ENCODE measurements at regions of chr3 and their contacts with region 1.

Region 1: GRCh38 chr3:71444028-71444860 is 139.3 kb downstream of the FOXP1 start:
- DNase-seq: peak; percentile 79
- H3K4me3 Mint-ChIP-seq: peak overlapping the region; percentile 65
- H3K27ac Mint-ChIP-seq: peak overlapping the region; percentile 95
- H3K4me1 Mint-ChIP-seq: peaks cover 87% of the 10 kb centered on the region
- H3K27me3 Mint-ChIP-seq: no peaks in the 10 kb centered on the region

Region 2: GRCh38 chr3:71369701-71370391 is 74.4 kb before region 1 on chr3:
- CTCF ChIA-PET with region 1: no interaction called
- POLR2A ChIA-PET with region 1: no interaction called
- intact Hi-C with region 1: no loop called
- DNase-seq: no peak
- H3K4me3 Mint-ChIP-seq: no peak overlapping the region
- H3K27ac Mint-ChIP-seq: no peak overlapping the region
- H3K4me1 Mint-ChIP-seq: peaks cover 39% of the 10 kb centered on the region
- H3K27me3 Mint-ChIP-seq: no peaks in the 10 kb centered on the region

Region 3: DNA sequence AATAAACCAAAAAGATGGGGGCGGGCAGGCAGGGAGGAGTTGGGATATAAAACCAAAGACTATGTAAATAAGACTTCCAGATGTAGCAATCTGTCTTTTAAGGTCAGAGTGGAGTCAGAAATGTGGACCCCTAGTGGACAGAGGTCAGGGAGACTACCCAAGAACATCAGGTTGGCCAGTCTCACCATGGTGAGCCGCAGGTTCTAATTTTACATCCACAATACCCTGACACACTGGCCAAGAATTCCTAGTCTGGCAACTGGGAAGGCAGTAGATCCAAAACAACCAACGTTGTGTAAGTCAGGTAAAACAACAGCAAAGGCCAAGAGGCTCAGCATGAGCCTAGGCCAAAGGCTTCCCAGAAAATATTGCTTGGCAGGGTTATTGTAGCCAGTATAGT is 64.1 kb before region 1 on chr3:
- CTCF ChIA-PET with region 1: no interaction called
- POLR2A ChIA-PET with region 1: interaction called, 3 read pairs
- intact Hi-C with region 1: loop called (anchors 2 kb)
- DNase-seq: no peak
- H3K4me3 Mint-ChIP-seq: no peak overlapping the region
- H3K27ac Mint-ChIP-seq: peak overlapping the region; percentile 85
- H3K4me1 Mint-ChIP-seq: peaks cover 82% of the 10 kb centered on the region
- H3K27me3 Mint-ChIP-seq: no peaks in the 10 kb centered on the region

Region 4: DNA sequence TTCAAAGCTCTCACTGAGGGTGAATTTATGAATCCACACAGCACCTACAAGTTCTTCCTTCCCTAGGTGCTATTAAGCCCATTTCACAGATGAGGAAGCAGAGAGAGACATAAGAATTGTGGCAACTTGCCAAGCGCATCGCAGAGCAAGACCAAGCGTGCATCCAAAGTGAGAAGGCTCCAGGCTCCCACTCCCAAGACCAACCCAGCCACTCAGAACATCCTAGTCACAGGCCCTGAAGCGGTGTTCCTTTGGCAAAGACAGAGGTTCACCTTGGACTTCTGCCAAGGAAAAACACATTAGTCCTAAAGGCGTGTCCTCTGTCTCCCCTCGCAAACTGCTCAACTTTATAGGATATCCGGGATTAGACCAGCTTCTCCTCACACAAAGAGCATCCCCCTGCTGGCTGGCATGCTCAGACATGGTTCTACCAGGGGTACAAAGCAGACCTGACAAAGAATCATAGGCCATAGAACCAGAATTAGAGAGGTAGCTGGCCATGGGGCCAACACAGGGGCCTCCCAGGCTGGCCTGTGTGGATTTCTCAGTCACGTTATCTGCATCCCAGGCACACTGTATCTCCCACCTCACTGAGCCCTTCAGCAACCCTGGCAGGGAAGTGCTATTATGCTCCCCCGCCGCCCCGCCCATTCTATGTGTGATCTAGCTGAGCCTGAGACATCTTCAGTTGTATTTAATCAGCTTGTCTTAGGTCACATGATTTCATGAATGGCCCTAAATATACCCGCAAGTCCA is 20.9 kb before region 1 on chr3:
- CTCF ChIA-PET with region 1: no interaction called
- POLR2A ChIA-PET with region 1: interaction called, 3 read pairs
- intact Hi-C with region 1: loop called (anchors 1 kb)
- DNase-seq: no peak
- H3K4me3 Mint-ChIP-seq: no peak overlapping the region
- H3K27ac Mint-ChIP-seq: peak overlapping the region; percentile 85
- H3K4me1 Mint-ChIP-seq: peaks cover 81% of the 10 kb centered on the region
- H3K27me3 Mint-ChIP-seq: no peaks in the 10 kb centered on the region

Region 5: DNA sequence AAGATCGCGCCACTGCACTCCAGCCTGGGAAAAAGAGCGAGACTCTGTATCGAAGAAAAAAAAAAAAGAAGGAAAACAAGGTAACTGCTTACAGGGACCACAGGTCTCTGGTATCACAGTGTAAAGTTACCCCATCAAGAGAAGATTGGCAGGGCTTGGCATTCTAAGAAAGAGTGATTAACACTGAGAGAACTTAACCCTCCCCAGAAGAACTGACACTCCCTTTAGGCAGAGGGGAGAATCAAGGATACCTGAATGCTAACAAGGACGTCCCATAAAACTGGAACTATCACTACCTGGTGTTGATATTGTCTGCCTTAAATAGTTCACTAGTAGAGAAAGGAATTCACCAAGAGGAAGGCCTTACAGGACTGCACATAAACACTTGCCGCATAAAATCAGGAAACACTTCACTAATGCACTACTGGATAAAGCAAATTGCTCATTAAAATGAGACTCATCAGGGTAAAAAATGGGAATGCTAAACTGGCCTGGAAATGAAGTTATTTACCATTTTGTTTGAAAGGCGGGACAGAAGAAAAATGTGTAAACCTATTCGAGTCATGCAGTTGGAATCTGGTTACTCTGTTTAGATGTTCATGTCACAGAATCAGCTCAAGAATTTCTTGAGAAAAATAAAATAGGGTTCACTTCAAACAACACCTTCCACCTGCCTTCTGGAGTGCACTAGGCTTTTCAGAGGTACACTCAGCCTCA is 17.7 kb after region 1 on chr3:
- CTCF ChIA-PET with region 1: interaction called, 3 read pairs
- POLR2A ChIA-PET with region 1: interaction called, 9 read pairs
- intact Hi-C with region 1: loop called (anchors 2 kb)
- DNase-seq: no peak
- H3K4me3 Mint-ChIP-seq: peak overlapping the region; percentile 47
- H3K27ac Mint-ChIP-seq: peak overlapping the region; percentile 94
- H3K4me1 Mint-ChIP-seq: peaks cover 67% of the 10 kb centered on the region
- H3K27me3 Mint-ChIP-seq: no peaks in the 10 kb centered on the region

Region 6: GRCh38 chr3:71488391-71488809 is 44.2 kb after region 1 on chr3:
- CTCF ChIA-PET with region 1: no interaction called
- POLR2A ChIA-PET with region 1: no interaction called
- intact Hi-C with region 1: loop called (anchors 1 kb)
- DNase-seq: no peak
- H3K4me3 Mint-ChIP-seq: peak overlapping the region; percentile 50
- H3K27ac Mint-ChIP-seq: peak overlapping the region; percentile 79
- H3K4me1 Mint-ChIP-seq: peaks cover 88% of the 10 kb centered on the region
- H3K27me3 Mint-ChIP-seq: no peaks in the 10 kb centered on the region

Region 7: DNA sequence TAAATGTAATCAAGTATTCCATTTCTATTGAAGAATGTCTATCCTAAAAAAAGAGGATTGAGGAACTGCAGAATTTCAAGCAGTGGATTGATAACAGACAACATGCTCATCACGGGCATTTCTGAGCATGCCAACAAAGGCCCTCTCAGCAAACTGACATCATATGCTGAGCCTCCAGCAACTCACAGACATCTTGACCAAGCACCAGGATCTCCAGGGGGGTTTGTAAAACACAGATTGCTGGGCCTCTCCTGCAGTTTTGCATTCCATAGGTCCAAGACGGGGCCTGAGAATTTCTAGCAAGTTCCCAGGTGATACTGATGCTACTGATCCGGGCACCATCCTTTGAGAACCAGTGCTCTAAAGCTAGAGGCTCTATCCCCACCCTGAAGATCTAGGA is 54.3 kb after region 1 on chr3:
- CTCF ChIA-PET with region 1: no interaction called
- POLR2A ChIA-PET with region 1: no interaction called
- intact Hi-C with region 1: no loop called
- DNase-seq: no peak
- H3K4me3 Mint-ChIP-seq: no peak overlapping the region
- H3K27ac Mint-ChIP-seq: no peak overlapping the region
- H3K4me1 Mint-ChIP-seq: peaks cover 67% of the 10 kb centered on the region
- H3K27me3 Mint-ChIP-seq: no peaks in the 10 kb centered on the region

Measured in activated CD4-positive, alpha-beta memory T cell treated with anti-CD3 and anti-CD28 coated beads for 36 hours (primary cell).